GM12878 (cell line): ENCODE measurements at regions of chr4 and their contacts with region 1.

Region 1: DNA sequence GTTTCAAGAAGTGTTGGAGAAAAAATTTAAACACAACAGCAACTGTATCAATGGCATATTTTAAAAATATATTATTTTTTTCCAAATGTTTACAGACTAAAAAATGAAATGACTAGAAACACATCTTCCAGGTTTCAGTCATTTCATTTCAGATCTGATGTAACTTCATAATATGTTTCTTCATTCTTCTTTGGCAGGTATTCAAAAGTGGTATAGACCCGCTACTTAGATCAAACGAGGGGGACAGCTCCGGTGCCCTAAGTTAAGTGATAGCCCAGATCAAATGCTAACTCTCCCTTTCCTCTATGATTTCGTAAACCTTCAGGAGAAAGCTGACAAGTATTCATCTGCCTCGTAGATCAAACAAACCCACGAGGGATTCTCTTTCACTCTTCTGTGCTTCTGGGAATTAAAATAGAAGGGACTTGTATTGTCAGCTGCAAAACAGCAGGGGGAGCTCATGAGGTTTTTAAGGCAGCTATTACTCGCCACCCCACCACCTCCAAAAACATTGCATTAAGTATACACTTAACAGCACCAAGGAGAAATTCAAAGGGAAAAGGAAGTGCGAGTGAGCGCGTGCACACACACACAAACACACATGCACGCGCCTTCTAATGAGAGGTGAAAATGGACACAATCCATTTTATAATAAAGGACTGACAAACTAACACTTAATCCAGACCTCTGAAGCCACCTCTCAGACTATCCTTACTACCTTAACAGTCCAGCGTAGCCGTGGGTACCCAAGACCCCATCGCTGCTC is 21.4 kb downstream of the HELT start:
- DNase-seq: peak; percentile 23
- ATAC-seq: peak; percentile 83
- H3K4me3 ChIP-seq: no peak overlapping the region
- H3K27ac ChIP-seq: no peak overlapping the region
- H3K4me1 ChIP-seq: no peaks in the 10 kb centered on the region
- H3K27me3 ChIP-seq: no peaks in the 10 kb centered on the region
- CTCF ChIP-seq: peak; percentile 73 to 80 (median 77)
- EP300 ChIP-seq: no peak
- POLR2A ChIP-seq: no peak
- RAD21 ChIP-seq: peak; percentile 74

Region 2: DNA sequence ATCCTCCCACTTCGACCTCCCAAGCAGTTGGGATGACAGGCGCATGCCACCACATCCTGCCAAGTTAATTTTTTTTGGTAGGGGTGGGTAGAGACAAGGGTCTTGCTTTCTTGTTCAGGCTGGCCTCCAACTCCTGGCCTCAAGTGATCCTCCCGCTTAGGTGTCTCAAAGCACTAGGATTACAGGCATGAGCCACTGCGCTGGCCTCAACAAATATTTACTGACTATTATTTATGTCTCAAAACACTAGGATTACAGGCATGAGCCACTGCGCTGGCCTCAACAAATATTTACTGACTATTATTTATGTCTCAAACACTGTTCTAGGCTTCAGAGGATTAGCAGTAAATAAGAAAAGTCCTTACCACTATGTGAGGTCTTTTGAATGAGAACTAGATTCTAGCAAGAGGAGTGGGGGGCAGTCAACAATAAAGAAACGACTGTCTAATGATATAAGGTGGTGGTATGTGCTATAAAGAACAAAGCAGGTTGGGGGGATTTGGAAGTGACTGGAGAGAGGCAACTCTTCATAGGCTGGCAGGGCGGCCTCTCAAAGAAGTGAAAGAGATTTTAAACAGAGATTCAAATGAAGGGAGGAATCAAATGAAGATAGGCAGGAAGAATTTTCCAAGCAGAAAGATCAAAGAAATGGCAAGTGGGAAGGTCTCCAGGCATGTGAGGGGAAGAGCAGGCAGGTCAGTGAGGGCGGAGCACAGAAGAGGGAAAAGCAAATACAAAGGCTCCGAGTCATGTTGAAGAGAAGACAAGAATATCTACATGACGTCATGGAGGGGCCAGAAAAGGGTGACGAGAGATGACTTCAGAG is 201.2 kb before region 1 on chr4:
- CTCF ChIA-PET with region 1: no interaction called
- POLR2A ChIA-PET with region 1: no interaction called
- RAD21 ChIA-PET with region 1: no interaction called
- SMC1A ChIA-PET with region 1: no interaction called
- in situ Hi-C with region 1: no loop called
- intact Hi-C with region 1: no loop called
- DNase-seq: no peak
- ATAC-seq: no peak
- H3K4me3 ChIP-seq: no peak overlapping the region
- H3K27ac ChIP-seq: no peak overlapping the region
- H3K4me1 ChIP-seq: no peaks in the 10 kb centered on the region
- H3K27me3 ChIP-seq: no peaks in the 10 kb centered on the region
- CTCF ChIP-seq: no peak
- EP300 ChIP-seq: no peak
- POLR2A ChIP-seq: no peak
- RAD21 ChIP-seq: no peak

Region 3: GRCh38 chr4:185054876-185055275 is 15.2 kb after region 1 on chr4:
- CTCF ChIA-PET with region 1: interaction called, 11 read pairs
- POLR2A ChIA-PET with region 1: no interaction called
- RAD21 ChIA-PET with region 1: interaction called, 4 read pairs
- SMC1A ChIA-PET with region 1: interaction called, 6 read pairs
- in situ Hi-C with region 1: no loop called
- intact Hi-C with region 1: no loop called
- DNase-seq: no peak
- ATAC-seq: no peak
- H3K4me3 ChIP-seq: no peak overlapping the region
- H3K27ac ChIP-seq: no peak overlapping the region
- H3K4me1 ChIP-seq: no peaks in the 10 kb centered on the region
- H3K27me3 ChIP-seq: peaks cover 3 to 4% of the 10 kb centered on the region in 2 experiments; a peak in 3 of 4 replicates
- CTCF ChIP-seq: no peak
- EP300 ChIP-seq: no peak
- POLR2A ChIP-seq: no peak
- RAD21 ChIP-seq: no peak

Region 4: DNA sequence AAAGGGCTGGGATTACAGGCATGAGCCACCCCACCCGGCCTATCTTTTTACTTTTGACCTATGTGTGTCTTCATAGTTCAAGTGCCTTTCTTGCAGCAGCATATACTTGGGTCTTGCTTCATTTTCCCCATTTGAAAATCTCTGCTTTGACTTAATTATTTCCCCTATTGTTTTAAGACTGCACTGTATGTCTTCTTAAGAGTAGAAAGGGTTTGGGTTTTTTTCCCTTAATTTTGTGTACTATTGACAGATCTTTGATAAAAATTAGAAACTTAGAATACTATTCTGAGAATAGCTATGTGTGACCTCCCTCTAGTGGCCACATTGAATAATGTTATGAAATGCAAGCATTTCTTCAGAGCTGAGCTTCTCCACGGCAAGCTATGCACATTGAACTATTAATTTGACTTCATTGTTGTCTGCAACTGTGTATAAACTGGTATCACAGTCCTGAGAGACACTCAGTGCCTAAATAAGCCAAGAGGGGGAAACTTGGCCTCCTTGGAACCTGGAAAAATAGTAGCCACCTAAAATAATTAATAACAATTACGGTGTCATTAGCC is 94.7 kb after region 1 on chr4:
- CTCF ChIA-PET with region 1: interaction called, 82 read pairs
- POLR2A ChIA-PET with region 1: interaction called, 3 read pairs
- RAD21 ChIA-PET with region 1: interaction called, 45 read pairs
- SMC1A ChIA-PET with region 1: interaction called, 27 read pairs
- in situ Hi-C with region 1: loop called (anchors 5 kb)
- intact Hi-C with region 1: loop called (anchors 1 kb)
- DNase-seq: no peak
- ATAC-seq: peak; percentile 91
- H3K4me3 ChIP-seq: no peak overlapping the region
- H3K27ac ChIP-seq: no peak overlapping the region
- H3K4me1 ChIP-seq: no peaks in the 10 kb centered on the region
- H3K27me3 ChIP-seq: no peaks in the 10 kb centered on the region; a peak in 1 of 4 replicates
- CTCF ChIP-seq: peak; percentile 69 to 83 (median 81)
- EP300 ChIP-seq: no peak
- POLR2A ChIP-seq: no peak
- RAD21 ChIP-seq: peak; percentile 79

Region 5: GRCh38 chr4:185171373-185172071 is 131.8 kb after region 1 on chr4:
- CTCF ChIA-PET with region 1: interaction called, 11 read pairs
- POLR2A ChIA-PET with region 1: no interaction called
- RAD21 ChIA-PET with region 1: no interaction called
- SMC1A ChIA-PET with region 1: no interaction called
- in situ Hi-C with region 1: no loop called
- intact Hi-C with region 1: no loop called
- DNase-seq: peak; percentile 19
- ATAC-seq: peak; percentile 92
- H3K4me3 ChIP-seq: no peak overlapping the region
- H3K27ac ChIP-seq: peak overlapping the region; percentile 70
- H3K4me1 ChIP-seq: peaks cover 13% of the 10 kb centered on the region
- H3K27me3 ChIP-seq: no peaks in the 10 kb centered on the region
- CTCF ChIP-seq: no peak
- EP300 ChIP-seq: no peak
- POLR2A ChIP-seq: no peak
- RAD21 ChIP-seq: no peak